G401 (cell line): ENCODE measurements at regions of chr13 and their contacts with region 1.

Region 1: DNA sequence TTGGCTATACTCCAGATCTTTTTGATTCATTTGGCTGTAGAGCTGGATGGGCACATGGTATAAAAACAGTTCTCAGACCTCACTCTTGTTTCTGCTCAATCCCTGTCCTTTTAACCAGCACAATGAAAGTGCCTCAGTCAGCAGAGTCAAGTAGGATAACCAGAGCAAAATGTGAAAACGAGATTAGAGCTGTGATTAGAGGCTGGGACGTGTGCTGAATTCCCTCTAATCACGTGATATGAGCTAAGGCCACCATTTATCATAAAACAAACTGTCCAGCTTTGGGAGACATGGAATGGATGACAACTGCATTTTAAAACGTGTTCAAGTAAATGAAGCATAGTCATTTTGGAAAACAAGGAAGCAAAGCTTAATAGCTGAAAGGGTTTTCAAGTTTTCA is 54.1 kb downstream of the GJA3 start:
- DNase-seq: no peak

Region 2: DNA sequence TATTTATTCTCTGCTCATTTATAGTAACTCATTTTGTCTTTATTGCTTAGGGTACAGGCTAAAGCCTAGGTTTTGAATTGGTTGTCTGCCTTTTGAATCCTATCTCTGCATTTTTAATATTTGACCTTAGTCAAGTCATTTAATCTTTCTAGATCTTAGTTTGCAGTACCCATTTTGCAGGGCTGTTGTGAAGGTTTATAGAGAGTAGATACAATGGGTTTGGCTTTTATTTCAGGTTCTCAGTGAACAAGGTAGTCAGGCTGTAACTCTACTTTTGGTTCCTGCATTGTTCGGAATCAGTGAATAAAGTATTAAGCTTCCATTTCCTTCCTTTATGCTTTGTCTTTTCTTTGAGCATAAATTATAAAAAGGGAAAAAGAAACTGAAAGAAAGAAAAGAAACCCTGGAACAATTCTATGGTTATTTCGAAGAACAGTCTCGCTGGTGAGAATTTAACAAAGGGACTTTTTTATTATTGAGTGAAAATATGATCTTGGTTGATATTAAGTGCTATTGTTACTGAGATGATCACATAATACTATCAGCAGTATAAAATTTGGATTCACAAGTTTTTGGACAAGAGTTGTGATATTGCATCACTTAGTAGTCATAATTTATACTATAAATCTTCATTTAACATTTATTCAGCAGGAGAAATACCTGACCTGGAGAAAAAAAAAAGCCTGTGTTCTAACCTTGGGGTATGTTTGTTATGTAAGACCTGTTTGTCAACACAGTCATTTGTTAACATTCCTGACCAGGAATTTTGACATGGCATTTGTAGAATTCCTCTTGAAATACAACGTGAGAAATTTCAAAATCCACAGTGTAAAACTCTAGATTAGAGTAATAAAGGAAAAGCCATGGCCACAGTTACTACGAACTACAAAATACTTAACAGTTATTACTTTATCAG is 56.9 kb before region 1 on chr13:
- in situ Hi-C with region 1: loop called (anchors 5 kb)
- DNase-seq: no peak

Region 3: GRCh38 chr13:20064128-20064527 is 42.6 kb before region 1 on chr13:
- in situ Hi-C with region 1: no loop called
- DNase-seq: no peak